GM12878 (cell line): ENCODE measurements at regions of chr4 and their contacts with region 1.

Region 1: GRCh38 chr4:128793859-128794672 is 15.4 kb upstream of the JADE1 start:
- DNase-seq: no peak
- ATAC-seq: peak; percentile 89
- H3K4me3 ChIP-seq: no peak overlapping the region
- H3K27ac ChIP-seq: no peak overlapping the region
- H3K4me1 ChIP-seq: no peaks in the 10 kb centered on the region
- H3K27me3 ChIP-seq: no peaks in the 10 kb centered on the region
- CTCF ChIP-seq: no peak
- EP300 ChIP-seq: no peak
- POLR2A ChIP-seq: no peak
- RAD21 ChIP-seq: no peak

Region 2: GRCh38 chr4:128565565-128566186 is 228.4 kb before region 1 on chr4:
- CTCF ChIA-PET with region 1: no interaction called
- POLR2A ChIA-PET with region 1: no interaction called
- RAD21 ChIA-PET with region 1: no interaction called
- SMC1A ChIA-PET with region 1: no interaction called
- in situ Hi-C with region 1: no loop called
- intact Hi-C with region 1: loop called (anchors 5 kb)
- DNase-seq: no peak
- ATAC-seq: peak; percentile 92
- H3K4me3 ChIP-seq: no peak overlapping the region
- H3K27ac ChIP-seq: no peak overlapping the region
- H3K4me1 ChIP-seq: no peaks in the 10 kb centered on the region
- H3K27me3 ChIP-seq: no peaks in the 10 kb centered on the region; a peak in 1 of 4 replicates
- CTCF ChIP-seq: peak; percentile 49 to 71 (median 55)
- EP300 ChIP-seq: no peak
- POLR2A ChIP-seq: no peak
- RAD21 ChIP-seq: peak; percentile 69